Activated naive CD4-positive, alpha-beta T cell treated with anti-CD3 and anti-CD28 coated beads for 36 hours (primary cell): ENCODE measurements at regions of chr14 and their contacts with region 1.

Region 1: GRCh38 chr14:91980127-91980741 is 32.7 kb upstream of the FBLN5 start:
- DNase-seq: peak; percentile 12
- H3K4me3 Mint-ChIP-seq: no peak overlapping the region
- H3K27ac Mint-ChIP-seq: no peak overlapping the region
- H3K4me1 Mint-ChIP-seq: peaks cover 30% of the 10 kb centered on the region
- H3K27me3 Mint-ChIP-seq: no peaks in the 10 kb centered on the region

Region 2: DNA sequence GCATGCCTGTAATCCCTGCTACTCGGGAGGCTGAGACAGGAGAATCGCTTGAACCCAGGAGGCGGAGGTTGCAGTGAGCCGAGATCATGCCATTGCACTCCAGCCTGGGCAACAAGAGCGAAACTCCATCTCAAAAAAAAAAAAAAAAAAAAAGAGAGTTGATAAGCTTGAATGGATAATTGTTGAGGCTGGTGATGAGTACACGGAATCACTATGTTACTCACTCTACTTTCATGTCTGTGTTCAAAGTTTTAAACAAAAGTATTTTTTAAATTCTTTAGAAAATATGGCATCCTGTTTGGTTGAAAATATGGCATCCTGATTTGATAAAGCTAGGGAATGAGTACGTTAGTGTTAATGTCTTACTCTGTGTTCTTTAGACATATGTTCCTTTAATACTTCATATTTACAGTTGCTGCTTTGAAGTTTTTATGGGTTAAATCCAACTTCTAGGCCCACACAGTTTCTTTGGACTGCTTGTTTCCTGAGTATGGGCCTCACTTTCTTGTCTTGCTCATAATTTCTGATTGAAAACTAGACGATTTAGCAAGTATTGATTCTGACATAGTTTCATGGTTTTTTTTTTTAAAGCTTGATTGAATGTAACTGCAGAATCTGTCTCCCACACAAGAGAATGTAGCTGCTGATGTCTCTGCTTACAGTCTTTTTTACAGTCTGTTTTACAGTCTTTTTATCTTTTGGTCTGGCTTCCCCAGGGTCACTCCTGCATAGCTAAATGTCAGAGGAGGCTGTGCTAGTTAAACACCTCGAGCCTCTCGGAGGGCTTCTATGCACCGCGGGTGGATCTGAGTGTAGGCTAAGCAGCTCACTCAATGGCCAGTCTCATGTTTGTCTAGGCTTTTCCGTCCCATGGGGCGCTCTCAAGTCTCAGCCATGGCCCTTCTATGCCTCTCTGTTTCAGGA is 18.7 kb before region 1 on chr14:
- CTCF ChIA-PET with region 1: no interaction called
- intact Hi-C with region 1: loop called (anchors 1 kb)
- DNase-seq: no peak
- H3K4me3 Mint-ChIP-seq: no peak overlapping the region
- H3K27ac Mint-ChIP-seq: peak overlapping the region; percentile 19
- H3K4me1 Mint-ChIP-seq: peaks cover 18% of the 10 kb centered on the region
- H3K27me3 Mint-ChIP-seq: no peaks in the 10 kb centered on the region

Region 3: DNA sequence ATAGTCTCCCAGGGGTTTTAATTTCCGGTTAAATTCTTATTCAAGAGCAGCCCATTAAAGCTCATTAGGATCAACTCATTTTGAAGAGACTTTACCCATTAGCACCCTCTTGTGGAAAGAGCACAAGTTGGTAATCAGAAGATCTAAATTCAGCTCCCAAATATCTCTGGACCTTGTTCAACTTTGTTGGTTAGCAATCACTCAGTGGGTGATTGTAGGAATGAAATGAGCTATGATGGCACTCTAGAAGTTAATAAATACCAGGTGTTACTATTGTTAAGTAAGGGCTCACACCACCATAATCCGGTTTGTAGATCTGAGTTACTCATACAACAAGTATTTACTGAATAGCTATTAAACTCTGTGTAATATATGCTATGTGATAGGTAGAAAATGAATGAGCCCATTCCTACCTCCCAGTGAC is 16.7 kb after region 1 on chr14:
- CTCF ChIA-PET with region 1: interaction called, 8 read pairs
- intact Hi-C with region 1: loop called (anchors 1 kb)
- DNase-seq: no peak
- H3K4me3 Mint-ChIP-seq: no peak overlapping the region
- H3K27ac Mint-ChIP-seq: no peak overlapping the region
- H3K4me1 Mint-ChIP-seq: peaks cover 38% of the 10 kb centered on the region
- H3K27me3 Mint-ChIP-seq: no peaks in the 10 kb centered on the region

Region 4: DNA sequence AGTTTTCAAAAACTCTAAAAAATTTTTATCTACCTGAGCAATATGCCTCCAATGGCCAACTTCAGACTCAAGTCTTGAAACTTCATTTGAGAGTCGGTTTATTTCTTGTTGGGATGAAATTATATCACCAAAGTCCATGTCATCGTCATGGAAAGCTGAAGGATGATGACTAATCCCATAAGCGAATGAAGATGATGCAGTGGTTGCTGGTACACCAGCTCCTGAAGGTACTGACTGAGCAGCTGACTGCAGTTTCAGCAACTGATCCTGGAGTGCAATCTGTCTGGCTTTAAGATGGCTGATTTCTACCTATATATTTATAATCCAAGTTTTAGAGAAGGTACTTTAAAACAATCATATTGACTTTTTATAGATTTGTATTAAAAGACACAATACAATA is 41.3 kb after region 1 on chr14:
- CTCF ChIA-PET with region 1: no interaction called
- intact Hi-C with region 1: loop called (anchors 5 kb)
- DNase-seq: no peak
- H3K4me3 Mint-ChIP-seq: no peak overlapping the region
- H3K27ac Mint-ChIP-seq: no peak overlapping the region
- H3K4me1 Mint-ChIP-seq: peaks cover 9% of the 10 kb centered on the region
- H3K27me3 Mint-ChIP-seq: no peaks in the 10 kb centered on the region